ENCODE measurements at regions of chr10 and their contacts with region 1.

Region 1: DNA sequence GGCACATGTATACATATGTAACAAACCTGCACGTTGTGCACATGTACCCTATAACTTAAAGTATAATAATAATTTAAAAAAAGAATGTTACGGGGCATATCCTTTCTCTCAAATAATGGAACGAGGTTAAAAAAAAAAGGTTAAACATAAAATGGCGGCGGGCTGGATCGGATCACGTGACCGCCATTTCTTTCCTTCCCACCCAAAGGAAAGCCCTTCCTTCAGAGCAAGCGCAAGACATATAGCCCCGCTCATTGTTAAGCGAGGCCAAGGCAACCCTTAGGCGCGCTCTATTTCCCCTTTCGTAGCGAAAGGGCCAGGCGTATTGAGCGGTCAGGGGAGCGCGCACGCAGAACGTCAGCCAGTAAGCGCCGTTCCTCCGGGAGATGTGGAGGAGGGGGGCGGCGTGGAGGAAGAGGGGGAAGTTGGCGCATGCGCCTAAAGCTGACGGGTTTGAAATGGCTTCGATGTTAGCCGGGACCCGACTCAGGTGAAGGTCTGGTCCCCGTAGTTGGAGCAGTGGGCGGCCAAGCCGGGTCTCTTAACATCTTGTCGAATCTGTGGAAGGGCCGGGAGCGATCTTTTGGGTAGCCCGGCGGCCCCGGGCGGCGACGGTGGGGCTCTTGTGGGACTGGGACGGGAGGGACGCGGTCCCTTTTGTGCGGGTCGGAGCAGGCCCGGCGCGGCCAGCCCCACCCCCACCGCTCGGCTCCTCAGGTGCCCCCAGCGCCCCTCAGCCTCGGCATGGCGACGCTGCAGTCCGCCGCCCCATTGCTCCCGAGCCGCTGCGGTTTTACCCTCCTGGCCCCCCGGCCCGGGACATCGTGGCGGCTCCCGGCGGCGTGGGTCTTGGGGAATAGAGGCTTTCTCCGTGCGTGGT is at the start of gene CCAR1:
- DNase-seq: peak; percentile 99
- H3K4me3 ChIP-seq: peak within 1 kb of the TSS; percentile 85 to 100 (median 94)
- H3K27ac ChIP-seq: peak within 1 kb of the TSS; percentile 86 to 97 (median 92)
- H3K4me1 ChIP-seq: peaks cover 6 to 18% (median 15%) of the 10 kb centered on the region in 4 donors
- H3K27me3 ChIP-seq: no peaks in the 10 kb centered on the region
- CTCF ChIP-seq: no peak
- EP300 ChIP-seq: no peak
- POLR2A ChIP-seq: no peak
- total RNA-seq, gene CCAR1: 28.5 to 44.4 (median 35.5) TPM

Region 2: DNA sequence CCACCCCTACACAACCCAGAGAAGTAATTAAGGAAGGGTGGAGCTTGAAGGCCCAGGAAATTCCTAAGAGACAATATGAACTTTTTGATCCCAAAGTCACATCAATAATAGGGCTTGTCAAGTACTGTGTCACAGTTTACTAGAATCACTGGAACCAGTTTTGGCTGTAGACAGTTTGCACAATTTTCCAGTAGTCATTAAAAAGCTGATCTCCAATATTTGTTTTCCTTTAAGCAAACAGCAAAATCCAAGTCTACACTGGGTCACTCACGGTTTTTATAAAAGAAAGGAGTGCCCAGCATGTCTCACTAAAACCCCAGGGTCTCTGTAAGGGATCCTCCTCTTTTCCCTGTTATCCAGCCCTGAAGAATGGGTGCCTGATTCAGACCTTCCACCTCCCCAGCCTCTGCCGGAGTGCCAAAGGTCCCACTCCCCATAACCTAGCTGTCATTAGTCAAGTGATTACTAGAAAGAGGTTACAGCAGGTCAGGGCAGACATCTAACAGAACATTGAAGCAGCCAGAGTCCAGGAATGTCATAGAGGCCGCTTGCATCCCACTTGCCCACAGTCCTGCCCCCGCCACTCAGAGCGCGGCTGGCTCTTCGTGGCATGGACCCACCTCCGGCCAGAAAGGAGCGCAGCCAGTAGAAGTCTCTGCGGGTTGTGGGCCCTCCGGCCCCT is 194.3 kb before region 1 on chr10:
- intact Hi-C with region 1: loop called (anchors 2 kb)
- DNase-seq: no peak
- H3K4me3 ChIP-seq: peak overlapping the region; percentile 77 to 99 (median 92)
- H3K27ac ChIP-seq: peak overlapping the region; percentile 91 to 98 (median 94)
- H3K4me1 ChIP-seq: peaks cover 4 to 19% (median 16%) of the 10 kb centered on the region in 4 donors
- H3K27me3 ChIP-seq: no peaks in the 10 kb centered on the region
- CTCF ChIP-seq: no peak
- EP300 ChIP-seq: no peak
- POLR2A ChIP-seq: no peak

Region 3: GRCh38 chr10:68550747-68551411 is 170.2 kb before region 1 on chr10:
- intact Hi-C with region 1: loop called (anchors 5 kb)
- DNase-seq: no peak
- H3K4me3 ChIP-seq: no peak overlapping the region
- H3K27ac ChIP-seq: no peak overlapping the region
- H3K4me1 ChIP-seq: peaks cover 0 to 3% (median 0%) of the 10 kb centered on the region in 4 donors
- H3K27me3 ChIP-seq: no peaks in the 10 kb centered on the region
- CTCF ChIP-seq: peak; percentile 74 to 90 (median 86)
- EP300 ChIP-seq: no peak
- POLR2A ChIP-seq: no peak

Region 4: GRCh38 chr10:69160809-69161241 is 439.8 kb after region 1 on chr10:
- intact Hi-C with region 1: no loop called
- DNase-seq: no peak
- H3K4me3 ChIP-seq: no peak overlapping the region
- H3K27ac ChIP-seq: no peak overlapping the region
- H3K4me1 ChIP-seq: no peaks in the 10 kb centered on the region
- H3K27me3 ChIP-seq: no peaks in the 10 kb centered on the region
- CTCF ChIP-seq: no peak
- EP300 ChIP-seq: no peak
- POLR2A ChIP-seq: no peak